ENCODE measurements at regions of chr3 and their contacts with region 1.

Region 1: GRCh38 chr3:13452490-13453335 is 27.4 kb upstream of the HDAC11 start:
- DNase-seq: peak; percentile 58 to 66 (median 63)
- H3K4me3 ChIP-seq: peak overlapping the region in 1 of 2 donors; percentile 72
- H3K4me3 Mint-ChIP-seq: peak overlapping the region; percentile 93 to 98 (median 98)
- H3K27ac ChIP-seq: peak overlapping the region; percentile 60
- H3K27ac Mint-ChIP-seq: peak overlapping the region; percentile 86 to 97 (median 96)
- H3K4me1 ChIP-seq: peaks cover 19% of the 10 kb centered on the region
- H3K4me1 Mint-ChIP-seq: peaks cover 10 to 25% (median 17%) of the 10 kb centered on the region in 4 donors
- H3K27me3 ChIP-seq: no peaks in the 10 kb centered on the region
- H3K27me3 Mint-ChIP-seq: no peaks in the 10 kb centered on the region

Region 2: GRCh38 chr3:13091898-13092611 is 360.7 kb before region 1 on chr3:
- CTCF ChIA-PET with region 1: interaction called, 92 read pairs
- POLR2A ChIA-PET with region 1: interaction called, 3 read pairs
- intact Hi-C with region 1: loop called (anchors 1 kb)
- DNase-seq: peak; percentile 67 to 77 (median 71)
- H3K4me3 ChIP-seq: no peak overlapping the region
- H3K4me3 Mint-ChIP-seq: peak overlapping the region in 1 of 8 donors; percentile 60
- H3K27ac ChIP-seq: no peak overlapping the region
- H3K27ac Mint-ChIP-seq: no peak overlapping the region
- H3K4me1 ChIP-seq: peaks cover 6% of the 10 kb centered on the region
- H3K4me1 Mint-ChIP-seq: peaks cover 4 to 6% (median 5%) of the 10 kb centered on the region in 4 donors
- H3K27me3 ChIP-seq: no peaks in the 10 kb centered on the region
- H3K27me3 Mint-ChIP-seq: peaks cover 3 to 9% of the 10 kb centered on the region in 2 donors

Region 3: GRCh38 chr3:13177641-13178040 is 275.1 kb before region 1 on chr3:
- CTCF ChIA-PET with region 1: no interaction called
- POLR2A ChIA-PET with region 1: no interaction called
- intact Hi-C with region 1: no loop called
- DNase-seq: no peak
- H3K4me3 ChIP-seq: no peak overlapping the region
- H3K4me3 Mint-ChIP-seq: no peak overlapping the region
- H3K27ac ChIP-seq: no peak overlapping the region
- H3K27ac Mint-ChIP-seq: no peak overlapping the region
- H3K4me1 ChIP-seq: no peaks in the 10 kb centered on the region
- H3K4me1 Mint-ChIP-seq: no peaks in the 10 kb centered on the region
- H3K27me3 ChIP-seq: no peaks in the 10 kb centered on the region
- H3K27me3 Mint-ChIP-seq: peaks cover 2 to 5% of the 10 kb centered on the region in 2 donors

Region 4: DNA sequence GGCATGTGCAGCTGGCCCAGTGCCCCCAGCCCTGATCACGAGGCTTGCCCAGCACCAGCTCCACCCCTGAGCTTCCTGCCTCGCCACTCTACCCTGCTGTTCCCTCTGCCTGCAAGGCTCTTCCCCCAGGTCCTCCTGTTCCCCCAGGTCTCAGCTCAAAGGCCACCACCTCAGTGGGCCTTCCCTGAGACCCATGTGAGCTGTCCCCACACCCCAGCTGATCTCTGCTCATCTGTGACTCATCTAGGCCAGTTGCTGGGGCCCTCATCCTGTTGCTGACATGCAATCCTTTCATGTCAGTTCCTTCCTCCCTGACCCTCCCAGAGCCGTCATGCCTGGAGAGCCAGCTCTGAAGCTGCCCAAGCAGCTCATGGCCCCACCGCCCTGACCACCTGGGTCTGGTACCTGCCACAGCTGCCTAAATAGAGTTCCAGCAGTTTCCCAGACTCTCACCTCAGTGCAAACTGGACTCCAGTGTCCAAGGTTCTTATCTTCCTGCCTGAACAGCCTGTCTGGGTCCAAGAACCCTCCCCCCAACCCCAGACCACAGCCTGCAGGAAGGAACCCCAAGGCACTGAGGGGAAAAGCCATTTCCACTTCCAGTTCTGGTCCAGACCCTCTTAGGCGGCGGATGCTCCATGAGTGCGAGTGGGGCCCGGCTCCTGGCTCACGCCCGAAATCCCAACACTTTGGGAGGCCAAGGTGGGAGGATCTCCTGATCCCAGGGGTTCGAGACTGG is 262.9 kb before region 1 on chr3:
- CTCF ChIA-PET with region 1: no interaction called
- POLR2A ChIA-PET with region 1: no interaction called
- intact Hi-C with region 1: no loop called
- DNase-seq: peak; percentile 5 to 48 (median 32)
- H3K4me3 ChIP-seq: no peak overlapping the region
- H3K4me3 Mint-ChIP-seq: peak overlapping the region; percentile 22 to 90 (median 80)
- H3K27ac ChIP-seq: no peak overlapping the region
- H3K27ac Mint-ChIP-seq: peak overlapping the region in 6 of 7 donors; percentile 76 to 97 (median 90)
- H3K4me1 ChIP-seq: peaks cover 27% of the 10 kb centered on the region
- H3K4me1 Mint-ChIP-seq: peaks cover 17 to 45% (median 29%) of the 10 kb centered on the region in 4 donors
- H3K27me3 ChIP-seq: no peaks in the 10 kb centered on the region
- H3K27me3 Mint-ChIP-seq: peaks cover 2 to 4% of the 10 kb centered on the region in 2 donors

Region 5: DNA sequence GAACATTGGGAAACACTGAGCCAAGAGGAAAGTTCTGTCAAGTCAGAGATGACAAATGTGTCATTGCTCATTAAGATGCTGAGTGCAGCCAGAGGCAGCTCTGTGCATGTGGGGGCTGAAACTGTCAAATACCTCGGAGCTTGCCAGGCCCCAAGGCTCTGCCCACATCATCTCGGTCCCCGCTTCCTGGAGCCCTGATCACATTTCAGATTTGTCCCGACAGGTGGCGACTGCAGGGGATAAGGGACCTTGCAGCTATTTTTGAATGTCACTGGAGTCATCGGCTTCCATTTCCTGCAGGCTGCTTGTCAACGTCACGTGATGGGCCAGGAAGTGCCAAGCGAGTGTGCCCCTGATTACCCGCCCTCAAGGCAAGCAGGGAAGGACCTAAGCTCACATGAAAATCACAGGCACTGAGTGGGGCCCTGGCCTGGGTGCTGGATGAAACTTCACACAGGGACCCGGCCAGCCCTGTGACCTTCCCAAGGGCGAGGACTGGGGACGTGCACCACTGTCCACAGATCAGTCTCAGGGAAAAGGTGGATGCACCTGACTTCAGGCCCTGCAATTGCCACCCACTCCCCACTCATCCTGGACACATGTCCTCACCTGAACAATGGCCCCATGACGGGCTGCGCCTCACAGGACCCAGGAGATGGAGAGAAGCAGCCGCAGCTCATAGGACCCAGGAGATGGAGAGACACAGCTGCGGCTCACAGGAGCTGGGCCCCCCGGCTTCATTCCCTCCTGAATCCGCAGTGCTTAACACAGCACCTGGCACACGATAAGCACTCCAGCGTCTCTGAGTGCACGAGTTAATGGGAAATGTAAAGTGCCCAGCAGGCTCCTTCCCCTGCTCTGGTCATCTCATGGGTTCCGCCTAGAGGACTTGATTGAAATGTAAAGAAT is 106.0 kb before region 1 on chr3:
- CTCF ChIA-PET with region 1: interaction called, 255 read pairs
- POLR2A ChIA-PET with region 1: interaction called, 57 read pairs
- intact Hi-C with region 1: loop called (anchors 1 kb)
- DNase-seq: peak; percentile 78 to 88 (median 82)
- H3K4me3 ChIP-seq: no peak overlapping the region
- H3K4me3 Mint-ChIP-seq: peak overlapping the region in 7 of 8 donors; percentile 48 to 72 (median 63)
- H3K27ac ChIP-seq: peak overlapping the region; percentile 47
- H3K27ac Mint-ChIP-seq: peak overlapping the region; percentile 88 to 94 (median 90)
- H3K4me1 ChIP-seq: peaks cover 46% of the 10 kb centered on the region
- H3K4me1 Mint-ChIP-seq: peaks cover 34 to 56% (median 41%) of the 10 kb centered on the region in 4 donors
- H3K27me3 ChIP-seq: no peaks in the 10 kb centered on the region
- H3K27me3 Mint-ChIP-seq: no peaks in the 10 kb centered on the region

Region 6: DNA sequence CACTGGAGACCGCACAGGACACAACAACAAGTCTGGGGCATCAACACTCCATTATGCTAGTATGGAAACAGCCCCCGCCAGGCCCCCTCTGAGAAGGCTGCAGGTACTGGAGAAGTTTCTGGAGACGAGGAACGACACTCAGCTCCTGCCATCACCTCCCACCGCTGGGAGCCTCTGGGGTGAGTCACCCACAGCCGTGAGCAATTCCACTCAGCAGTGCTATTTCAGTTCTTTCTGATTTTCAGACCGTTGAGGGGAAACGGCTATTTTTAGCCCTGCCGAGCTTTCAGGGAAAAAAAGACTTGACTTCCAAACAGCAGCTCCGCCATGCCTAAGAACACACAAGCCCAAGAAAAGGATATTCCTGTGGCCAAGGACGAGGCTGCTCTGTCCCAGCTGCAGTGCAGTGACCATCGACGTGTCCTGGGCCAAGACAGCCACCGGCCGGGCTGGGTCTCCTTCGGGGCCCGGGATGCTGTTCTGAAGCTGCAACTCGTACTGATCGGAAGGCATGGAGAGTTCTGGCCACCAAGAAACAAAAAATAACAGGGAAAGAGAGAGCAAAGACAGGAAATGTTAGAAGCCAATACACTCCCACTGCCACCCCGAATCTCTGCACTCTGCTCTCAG is 73.4 kb before region 1 on chr3:
- CTCF ChIA-PET with region 1: interaction called, 25 read pairs
- POLR2A ChIA-PET with region 1: interaction called, 7 read pairs
- intact Hi-C with region 1: no loop called
- DNase-seq: no peak
- H3K4me3 ChIP-seq: no peak overlapping the region
- H3K4me3 Mint-ChIP-seq: no peak overlapping the region
- H3K27ac ChIP-seq: no peak overlapping the region
- H3K27ac Mint-ChIP-seq: peak overlapping the region in 1 of 7 donors; percentile 54
- H3K4me1 ChIP-seq: no peaks in the 10 kb centered on the region
- H3K4me1 Mint-ChIP-seq: peaks cover 0 to 7% (median 3%) of the 10 kb centered on the region in 4 donors
- H3K27me3 ChIP-seq: no peaks in the 10 kb centered on the region
- H3K27me3 Mint-ChIP-seq: no peaks in the 10 kb centered on the region

Region 7: DNA sequence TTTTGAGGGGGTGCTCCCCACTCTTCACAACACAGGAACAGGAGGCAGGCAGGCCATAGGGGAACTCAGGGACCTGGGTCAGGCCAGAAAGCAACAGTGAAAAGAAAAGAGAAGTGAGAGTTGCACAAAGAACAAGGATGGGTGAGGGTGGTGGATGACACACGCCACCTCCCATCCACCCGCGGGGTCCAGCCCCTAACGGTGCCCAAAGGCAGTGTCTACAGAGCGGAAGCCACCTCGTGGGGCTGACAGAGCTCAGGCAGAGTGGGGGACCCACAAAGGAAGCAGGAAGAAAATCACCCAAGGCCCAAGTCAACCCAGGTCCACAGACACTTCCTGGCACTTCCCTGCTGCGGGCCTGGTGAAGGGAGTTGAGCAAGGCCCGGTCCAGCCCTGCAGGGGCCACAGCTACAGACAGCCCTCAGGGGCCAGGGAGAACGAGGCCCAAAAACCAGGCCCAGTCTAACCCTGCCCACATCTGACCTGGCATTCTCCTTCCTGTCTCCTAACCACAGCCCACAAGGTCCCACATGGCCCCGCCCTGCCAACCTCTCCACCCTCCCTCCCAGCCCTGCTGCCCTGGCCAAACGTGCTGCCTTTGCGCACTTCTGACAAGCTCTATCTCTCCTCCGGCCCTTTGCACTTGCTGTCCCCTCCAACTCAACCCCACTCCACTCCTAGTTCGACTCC is 38.5 kb before region 1 on chr3:
- CTCF ChIA-PET with region 1: interaction called, 134 read pairs
- POLR2A ChIA-PET with region 1: interaction called, 137 read pairs
- intact Hi-C with region 1: loop called (anchors 1 kb)
- DNase-seq: peak; percentile 75 to 86 (median 78)
- H3K4me3 ChIP-seq: peak overlapping the region; percentile 26 to 58
- H3K4me3 Mint-ChIP-seq: peak overlapping the region; percentile 78 to 96 (median 87)
- H3K27ac ChIP-seq: peak overlapping the region; percentile 90
- H3K27ac Mint-ChIP-seq: peak overlapping the region; percentile 94 to 99 (median 97)
- H3K4me1 ChIP-seq: peaks cover 72% of the 10 kb centered on the region
- H3K4me1 Mint-ChIP-seq: peaks cover 47 to 70% (median 57%) of the 10 kb centered on the region in 4 donors
- H3K27me3 ChIP-seq: no peaks in the 10 kb centered on the region
- H3K27me3 Mint-ChIP-seq: no peaks in the 10 kb centered on the region

Region 8: DNA sequence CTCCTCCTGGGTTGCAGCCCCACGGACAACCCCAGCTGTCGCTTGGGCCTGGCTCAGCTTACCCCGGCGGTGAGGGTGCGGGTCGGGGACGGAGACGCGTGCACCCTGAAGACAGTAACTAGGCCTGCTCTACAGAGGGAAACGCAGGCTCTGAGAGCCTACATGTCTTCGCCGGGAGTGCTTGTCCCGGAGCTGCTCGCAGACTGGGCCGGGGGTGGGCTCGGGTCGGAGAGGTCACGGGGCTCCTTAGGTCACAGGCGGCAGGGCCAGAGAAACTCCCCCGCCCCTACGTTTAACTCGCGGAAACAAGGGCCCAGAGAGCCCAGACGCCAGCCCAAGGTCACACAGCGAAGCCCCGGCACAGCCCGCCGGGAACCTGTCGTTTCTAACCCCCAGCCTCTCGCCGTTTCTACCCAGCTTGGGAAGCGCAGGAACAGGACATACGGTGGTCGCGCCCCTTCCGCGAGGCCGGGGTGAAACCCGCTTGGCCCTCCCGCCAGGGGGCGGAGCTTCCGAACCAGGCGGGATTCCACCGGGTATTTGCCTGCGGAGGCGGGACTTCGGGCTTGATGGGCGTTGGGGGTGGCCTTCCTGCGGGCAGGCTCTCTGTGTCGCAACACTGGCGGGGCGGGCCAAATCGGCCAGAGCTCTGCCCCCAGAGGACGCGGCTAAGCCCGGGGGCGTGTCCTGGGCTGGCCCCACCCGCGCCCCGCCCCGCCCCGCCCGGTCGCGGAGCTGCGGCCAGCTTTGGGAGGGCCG is 27.0 kb after region 1 on chr3 and contains the start of gene HDAC11:
- CTCF ChIA-PET with region 1: interaction called, 7 read pairs
- POLR2A ChIA-PET with region 1: interaction called, 21 read pairs
- intact Hi-C with region 1: loop called (anchors 1 kb)
- DNase-seq: peak; percentile 96 to 97 (median 96)
- H3K4me3 ChIP-seq: peak within 1 kb of the TSS; percentile 52 to 92
- H3K4me3 Mint-ChIP-seq: peak within 1 kb of the TSS; percentile 91 to 95 (median 94)
- H3K27ac ChIP-seq: peak within 1 kb of the TSS; percentile 90
- H3K27ac Mint-ChIP-seq: peak within 1 kb of the TSS; percentile 94 to 96 (median 96)
- H3K4me1 ChIP-seq: peaks cover 28% of the 10 kb centered on the region
- H3K4me1 Mint-ChIP-seq: peaks cover 6 to 35% (median 20%) of the 10 kb centered on the region in 4 donors
- H3K27me3 ChIP-seq: no peaks in the 10 kb centered on the region
- H3K27me3 Mint-ChIP-seq: peaks cover 0 to under 1% of the 10 kb centered on the region in 2 donors
- total RNA-seq, gene HDAC11: 7.1 to 7.6 TPM

Measured in CD4-positive, alpha-beta memory T cell (primary cell).